ENCODE measurements at regions of chr18 and their contacts with region 1.

Region 1: GRCh38 chr18:623761-624620 is 27.2 kb downstream of the CLUL1 start:
- DNase-seq: peak; percentile 81
- H3K4me3 Mint-ChIP-seq: no peak overlapping the region
- H3K27ac Mint-ChIP-seq: no peak overlapping the region
- H3K4me1 Mint-ChIP-seq: no peaks in the 10 kb centered on the region
- H3K27me3 Mint-ChIP-seq: no peaks in the 10 kb centered on the region

Region 2: GRCh38 chr18:741931-742512 is 118.0 kb after region 1 on chr18:
- CTCF ChIA-PET with region 1: interaction called, 6 read pairs
- intact Hi-C with region 1: loop called (anchors 2 kb)
- DNase-seq: no peak
- H3K4me3 Mint-ChIP-seq: no peak overlapping the region
- H3K27ac Mint-ChIP-seq: no peak overlapping the region
- H3K4me1 Mint-ChIP-seq: no peaks in the 10 kb centered on the region
- H3K27me3 Mint-ChIP-seq: no peaks in the 10 kb centered on the region